GM13977 (cell line): ENCODE measurements at regions of chr17 and their contacts with region 1.

Region 1: GRCh38 chr17:43695970-43696865 is 34.5 kb upstream of the MEOX1 start:
- DNase-seq: no peak
- CTCF ChIP-seq: no peak

Region 2: DNA sequence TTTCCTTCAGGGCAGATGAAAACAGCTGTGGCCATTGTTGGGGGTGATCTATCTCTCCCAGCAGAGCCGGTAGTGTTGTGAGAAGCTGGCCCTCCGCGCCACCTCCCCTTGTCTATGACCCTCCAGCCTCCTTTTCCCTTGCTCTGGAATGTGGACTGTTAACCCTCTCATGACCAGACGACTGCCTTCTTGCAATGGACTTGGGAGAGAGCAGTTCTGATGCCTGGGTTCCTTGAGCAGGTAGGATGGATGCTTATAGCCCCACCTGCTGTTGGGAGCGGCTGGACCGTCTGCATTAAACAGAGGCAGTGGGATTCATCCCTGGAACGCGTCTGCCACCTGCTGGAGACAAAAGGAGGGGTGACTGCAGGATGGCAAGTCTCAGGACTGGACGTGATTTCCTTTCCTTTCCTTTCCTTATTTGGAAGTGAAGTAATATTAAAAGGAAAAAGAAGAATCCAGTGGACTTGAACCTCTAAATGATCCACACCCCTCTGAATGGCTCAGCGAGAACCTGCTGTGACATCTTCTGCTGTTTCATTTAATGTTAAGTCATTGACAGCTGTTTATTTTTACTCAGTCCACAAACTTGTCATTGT is 64.1 kb after region 1 on chr17:
- in situ Hi-C with region 1: loop called (anchors 5 kb)
- DNase-seq: peak; percentile 92
- CTCF ChIP-seq: peak; percentile 99

Region 3: GRCh38 chr17:44308320-44308818 is 612.2 kb after region 1 on chr17 and contains the start of gene RUNDC3A:
- in situ Hi-C with region 1: no loop called
- DNase-seq: peak; percentile 93
- CTCF ChIP-seq: no peak